Vagina (tissue), 2 donors: ENCODE measurements at regions of chr6 and their contacts with region 1.

Region 1: GRCh38 chr6:27132532-27133280 is 114.8 kb upstream of the PRSS16 start:
- DNase-seq: peak; percentile 97 to 99
- H3K4me3 ChIP-seq: peak overlapping the region; percentile 58 to 61
- H3K27ac ChIP-seq: peak overlapping the region; percentile 90
- H3K4me1 ChIP-seq: peaks cover 20% of the 10 kb centered on the region
- H3K27me3 ChIP-seq: no peaks in the 10 kb centered on the region
- CTCF ChIP-seq: no peak
- POLR2A ChIP-seq: peak; percentile 5 to 93

Region 2: DNA sequence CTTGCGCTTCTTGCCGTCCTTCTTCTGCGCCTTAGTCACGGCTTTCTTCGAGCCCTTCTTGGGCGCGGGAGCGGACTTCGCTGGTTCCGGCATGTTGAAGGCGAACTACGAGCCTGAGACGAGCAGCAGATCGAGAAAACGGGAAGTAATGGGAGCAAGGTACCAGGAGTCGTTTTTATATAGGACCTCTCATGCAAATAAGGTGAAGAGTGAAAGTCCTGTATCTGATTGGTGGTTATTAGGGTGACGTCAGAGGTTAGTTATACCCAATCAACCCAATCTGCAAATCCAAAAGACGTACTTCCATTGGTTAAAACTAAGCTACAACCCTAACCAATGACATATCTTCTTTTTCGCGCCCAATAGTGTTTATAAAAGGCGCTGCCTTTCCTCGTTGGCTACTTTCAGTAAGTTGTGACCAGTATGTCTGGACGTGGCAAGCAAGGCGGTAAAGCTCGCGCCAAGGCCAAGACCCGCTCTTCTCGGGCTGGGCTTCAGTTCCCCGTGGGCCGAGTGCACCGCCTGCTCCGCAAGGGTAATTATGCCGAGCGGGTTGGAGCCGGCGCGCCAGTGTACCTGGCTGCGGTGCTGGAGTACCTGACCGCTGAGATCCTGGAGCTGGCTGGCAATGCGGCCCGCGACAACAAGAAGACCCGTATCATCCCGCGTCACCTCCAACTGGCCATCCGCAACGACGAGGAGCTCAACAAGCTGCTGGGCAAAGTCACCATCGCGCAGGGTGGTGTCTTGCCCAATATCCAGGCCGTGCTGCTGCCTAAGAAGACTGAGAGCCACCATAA is 14.2 kb after region 1 on chr6:
- intact Hi-C with region 1: loop called (anchors 2 kb)
- DNase-seq: peak in 1 of 2 donors; percentile 97
- H3K4me3 ChIP-seq: peak overlapping the region; percentile 59 to 71
- H3K27ac ChIP-seq: peak overlapping the region; percentile 92
- H3K4me1 ChIP-seq: peaks cover 8% of the 10 kb centered on the region
- H3K27me3 ChIP-seq: no peaks in the 10 kb centered on the region
- CTCF ChIP-seq: no peak
- POLR2A ChIP-seq: peak in 1 of 2 donors; percentile 94

Region 3: GRCh38 chr6:27472617-27473400 is 340.1 kb after region 1 on chr6 and contains the start of gene ZNF184:
- intact Hi-C with region 1: loop called (anchors 10 kb)
- DNase-seq: peak in 1 of 2 donors; percentile 96
- H3K4me3 ChIP-seq: peak within 1 kb of the TSS; percentile 68 to 97
- H3K27ac ChIP-seq: peak within 1 kb of the TSS; percentile 86
- H3K4me1 ChIP-seq: peaks cover 37% of the 10 kb centered on the region
- H3K27me3 ChIP-seq: no peaks in the 10 kb centered on the region
- CTCF ChIP-seq: peak in 1 of 3 experiments; percentile 4
- POLR2A ChIP-seq: peak in 1 of 2 donors; percentile 51
- total RNA-seq, gene ZNF184: 4.4 TPM